Activated CD4-positive, alpha-beta memory T cell treated with anti-CD3 and anti-CD28 coated beads for 36 hours (primary cell): ENCODE measurements at regions of chr11 and their contacts with region 1.

Region 1: DNA sequence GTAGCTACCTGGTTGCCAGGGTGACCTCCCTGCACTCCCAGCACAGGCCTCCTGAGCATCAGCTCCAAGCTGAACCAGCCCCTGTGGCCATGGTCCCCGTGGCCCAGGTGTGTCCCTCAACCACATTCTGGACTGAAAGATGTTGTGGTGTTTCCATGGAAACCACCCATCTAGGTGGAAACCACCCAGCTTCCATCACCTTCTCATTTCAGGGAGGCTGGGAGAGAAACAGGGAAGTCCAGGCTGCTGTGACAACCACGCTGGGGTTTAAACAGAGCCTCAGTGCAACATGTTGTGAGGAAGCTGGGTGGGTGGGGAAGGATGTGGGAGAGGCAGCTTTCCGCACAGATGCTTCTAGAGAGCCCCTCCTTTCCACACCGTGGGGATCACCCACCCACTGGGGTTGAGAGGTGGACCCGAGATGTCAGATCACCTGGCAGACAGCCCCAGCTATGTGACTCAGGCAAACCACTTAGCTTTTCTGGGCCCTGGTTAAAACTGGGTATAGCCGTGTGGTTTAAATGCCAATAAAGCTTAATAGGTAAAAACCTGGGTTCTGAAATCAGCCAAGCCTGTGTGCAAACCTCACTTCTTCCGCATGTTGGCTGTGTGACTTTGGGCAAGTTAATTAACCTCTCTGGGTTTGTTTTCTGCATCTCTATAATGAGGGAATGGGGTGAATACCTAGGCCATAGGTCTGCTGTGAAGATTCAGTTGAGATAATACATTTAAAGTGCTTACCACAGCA is 46.4 kb downstream of the CD82 start:
- DNase-seq: peak; percentile 82
- H3K4me3 Mint-ChIP-seq: no peak overlapping the region
- H3K27ac Mint-ChIP-seq: peak overlapping the region; percentile 64
- H3K4me1 Mint-ChIP-seq: peaks cover 80% of the 10 kb centered on the region
- H3K27me3 Mint-ChIP-seq: no peaks in the 10 kb centered on the region

Region 2: DNA sequence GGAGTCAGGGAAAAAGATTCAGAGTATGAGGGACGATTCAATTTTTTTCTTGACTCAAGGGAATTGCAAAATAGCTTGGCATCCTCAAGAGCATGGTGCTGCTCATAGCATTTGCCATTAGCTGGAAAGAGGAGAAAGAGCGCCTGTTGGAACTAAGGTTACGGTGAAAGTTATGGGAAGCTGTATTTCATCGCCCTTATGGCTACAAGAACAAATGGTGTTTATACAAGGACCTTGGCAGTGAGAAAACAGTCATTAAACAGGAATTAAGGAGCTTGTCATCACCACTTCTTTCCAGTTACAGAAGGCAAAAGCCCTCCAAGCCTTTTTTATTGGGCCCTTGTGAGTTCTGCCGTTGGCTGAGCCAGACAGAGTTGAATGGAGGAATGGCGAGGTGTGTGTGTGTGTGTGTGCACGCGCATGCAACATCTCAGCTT is 376.1 kb before region 1 on chr11:
- CTCF ChIA-PET with region 1: no interaction called
- POLR2A ChIA-PET with region 1: no interaction called
- intact Hi-C with region 1: no loop called
- DNase-seq: no peak
- H3K4me3 Mint-ChIP-seq: no peak overlapping the region
- H3K27ac Mint-ChIP-seq: no peak overlapping the region
- H3K4me1 Mint-ChIP-seq: no peaks in the 10 kb centered on the region
- H3K27me3 Mint-ChIP-seq: no peaks in the 10 kb centered on the region

Region 3: GRCh38 chr11:44574610-44575287 is 37.1 kb before region 1 on chr11:
- CTCF ChIA-PET with region 1: interaction called, 33 read pairs
- POLR2A ChIA-PET with region 1: interaction called, 4 read pairs
- intact Hi-C with region 1: loop called (anchors 1 kb)
- DNase-seq: peak; percentile 72
- H3K4me3 Mint-ChIP-seq: peak overlapping the region; percentile 57
- H3K27ac Mint-ChIP-seq: peak overlapping the region; percentile 99
- H3K4me1 Mint-ChIP-seq: peaks cover 98% of the 10 kb centered on the region
- H3K27me3 Mint-ChIP-seq: no peaks in the 10 kb centered on the region

Region 4: DNA sequence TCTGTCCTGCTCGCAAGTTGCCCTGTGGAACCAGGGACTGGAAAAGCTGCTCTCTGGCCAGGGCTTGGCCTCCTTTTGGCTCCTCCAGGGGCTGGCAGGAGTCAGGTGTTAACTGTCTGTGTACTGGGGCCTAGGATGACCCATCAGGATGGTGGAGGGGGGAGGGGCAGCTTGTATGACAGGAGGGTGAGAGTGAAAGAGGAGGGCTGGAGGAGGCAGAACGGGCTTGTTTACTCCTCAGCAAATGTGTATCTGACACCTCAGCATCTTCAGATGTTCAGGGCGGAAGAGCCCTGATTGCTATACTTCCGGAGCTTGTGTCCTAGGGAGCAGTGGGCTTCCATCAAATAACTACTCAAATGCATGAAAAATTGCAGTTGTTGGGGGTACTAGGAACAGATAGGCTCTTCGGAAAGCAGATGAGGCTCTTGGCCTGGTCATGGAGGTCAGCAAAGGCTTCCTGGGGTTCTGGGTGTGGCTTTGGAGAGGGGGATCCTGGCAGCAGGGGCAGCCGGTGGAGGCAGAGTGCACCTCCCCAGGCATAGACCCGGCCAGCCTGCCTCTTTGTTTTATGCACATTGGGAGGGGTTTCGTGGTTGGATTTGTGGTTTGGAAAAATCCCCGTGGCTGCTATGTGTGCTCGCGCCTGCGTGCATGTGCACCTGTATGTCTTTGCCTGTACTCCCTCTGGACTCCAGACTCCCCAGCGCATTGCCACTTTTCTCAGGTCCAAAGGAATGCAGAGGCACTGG is 15.2 kb before region 1 on chr11:
- CTCF ChIA-PET with region 1: interaction called, 24 read pairs
- POLR2A ChIA-PET with region 1: interaction called, 11 read pairs
- intact Hi-C with region 1: loop called (anchors 1 kb)
- DNase-seq: peak; percentile 88
- H3K4me3 Mint-ChIP-seq: peak overlapping the region; percentile 63
- H3K27ac Mint-ChIP-seq: peak overlapping the region; percentile 90
- H3K4me1 Mint-ChIP-seq: peaks cover 86% of the 10 kb centered on the region
- H3K27me3 Mint-ChIP-seq: no peaks in the 10 kb centered on the region

Region 5: DNA sequence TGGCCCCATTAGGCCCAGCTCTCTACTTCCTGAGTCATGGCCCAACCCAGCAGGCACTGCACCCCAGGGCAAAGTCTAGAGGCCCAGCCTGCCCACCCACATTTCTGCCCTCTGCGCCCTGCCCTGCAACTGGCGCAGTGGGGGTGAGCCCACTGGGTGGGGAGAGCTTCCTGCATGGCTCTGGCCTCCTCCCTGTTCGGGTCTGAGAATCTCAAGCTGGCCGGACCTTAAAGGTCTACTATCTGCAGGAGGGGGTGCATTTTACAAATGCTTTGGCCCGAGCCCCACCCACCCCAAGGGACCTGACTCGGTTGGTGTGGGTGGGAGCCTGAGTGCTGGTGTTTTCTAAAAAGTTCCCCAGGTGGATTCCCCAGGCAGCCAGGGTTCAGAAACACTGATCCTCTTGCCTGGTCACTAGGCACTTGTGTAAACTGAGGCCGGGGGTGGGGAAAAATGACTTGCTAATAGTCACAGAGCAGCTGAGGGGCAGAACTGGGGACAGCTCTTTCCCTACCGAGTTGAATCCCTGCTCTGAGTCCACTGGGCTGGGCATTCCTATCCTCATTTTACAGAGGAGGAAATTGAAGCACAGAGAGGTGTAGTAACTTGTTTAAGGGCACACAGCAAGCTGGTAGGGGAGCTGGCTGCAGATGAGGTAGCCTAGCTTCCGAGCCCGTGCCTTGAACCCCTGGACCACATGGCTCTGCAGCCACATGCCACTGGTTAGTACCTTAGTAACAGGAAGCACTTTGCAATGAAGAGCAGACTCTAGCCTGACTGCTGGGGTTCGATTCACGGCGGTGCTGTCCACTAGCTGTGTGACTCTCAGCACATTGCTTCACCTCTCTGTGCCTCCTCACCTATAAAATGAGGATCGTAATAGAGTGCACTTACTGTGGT is 10.1 kb before region 1 on chr11:
- CTCF ChIA-PET with region 1: interaction called, 22 read pairs
- POLR2A ChIA-PET with region 1: interaction called, 8 read pairs
- intact Hi-C with region 1: loop called (anchors 1 kb)
- DNase-seq: peak; percentile 54
- H3K4me3 Mint-ChIP-seq: peak overlapping the region; percentile 8
- H3K27ac Mint-ChIP-seq: peak overlapping the region; percentile 78
- H3K4me1 Mint-ChIP-seq: peaks cover 65% of the 10 kb centered on the region
- H3K27me3 Mint-ChIP-seq: no peaks in the 10 kb centered on the region